ENCODE measurements at regions of chr11 and their contacts with region 1.

Region 1: DNA sequence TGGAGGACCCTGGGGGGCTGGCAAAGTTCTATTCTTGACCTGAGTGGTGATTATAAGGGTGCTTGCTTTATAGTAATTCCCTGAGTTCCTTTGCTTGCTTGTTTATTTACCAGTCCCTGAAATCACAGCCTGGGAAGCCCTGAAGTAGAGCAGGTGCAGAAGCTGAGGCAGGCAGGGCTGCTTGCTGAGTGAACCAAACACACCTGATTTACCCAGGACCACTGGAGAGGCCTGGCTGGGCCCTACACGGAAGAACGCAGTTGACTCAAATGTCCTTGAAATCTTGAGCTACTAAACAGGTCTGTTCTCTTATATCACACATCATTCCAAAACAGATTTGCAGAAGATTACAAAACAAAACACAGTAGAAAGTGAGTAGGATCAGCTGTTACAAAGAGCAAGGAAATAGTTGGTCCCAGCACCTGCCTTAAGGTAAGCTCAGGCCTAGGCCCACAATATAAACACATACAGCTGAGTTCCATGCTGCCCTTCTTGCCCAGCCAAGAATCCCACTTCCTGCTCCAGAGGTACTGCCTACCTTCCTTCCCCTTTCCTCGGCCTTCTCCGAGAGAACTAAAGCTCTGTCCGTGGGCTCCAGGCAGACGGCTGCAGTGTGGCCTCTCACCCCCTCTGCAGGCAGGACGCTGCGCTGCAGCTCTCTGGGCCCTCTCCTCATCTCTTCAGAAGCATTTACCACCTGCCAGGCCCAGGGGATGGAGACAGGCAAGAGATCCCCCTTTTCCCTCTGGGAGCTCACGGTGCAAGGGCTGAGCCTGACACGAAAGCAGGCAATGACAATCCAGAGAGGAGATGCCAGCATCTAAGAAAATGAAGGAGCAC is 46.1 kb upstream of the SCUBE2 start:
- DNase-seq: peak; percentile 85
- H3K4me3 Mint-ChIP-seq: no peak overlapping the region
- H3K27ac Mint-ChIP-seq: peak overlapping the region; percentile 77
- H3K4me1 Mint-ChIP-seq: peaks cover 33% of the 10 kb centered on the region
- H3K27me3 Mint-ChIP-seq: no peaks in the 10 kb centered on the region

Region 2: GRCh38 chr11:8682303-8683114 is 455.0 kb before region 1 on chr11 and contains the starts of genes RPL27A and TRIM66:
- CTCF ChIA-PET with region 1: no interaction called
- intact Hi-C with region 1: loop called (anchors 2 kb)
- DNase-seq: peak; percentile 99
- H3K4me3 Mint-ChIP-seq: peak within 1 kb of the TSS; percentile 91
- H3K27ac Mint-ChIP-seq: peak within 1 kb of the TSS; percentile 92
- H3K4me1 Mint-ChIP-seq: peaks cover 42% of the 10 kb centered on the region
- H3K27me3 Mint-ChIP-seq: no peaks in the 10 kb centered on the region
- total RNA-seq, gene RPL27A: 1,157 to 1,188 TPM
- total RNA-seq, gene TRIM66: 16.4 to 19.1 TPM

Region 3: DNA sequence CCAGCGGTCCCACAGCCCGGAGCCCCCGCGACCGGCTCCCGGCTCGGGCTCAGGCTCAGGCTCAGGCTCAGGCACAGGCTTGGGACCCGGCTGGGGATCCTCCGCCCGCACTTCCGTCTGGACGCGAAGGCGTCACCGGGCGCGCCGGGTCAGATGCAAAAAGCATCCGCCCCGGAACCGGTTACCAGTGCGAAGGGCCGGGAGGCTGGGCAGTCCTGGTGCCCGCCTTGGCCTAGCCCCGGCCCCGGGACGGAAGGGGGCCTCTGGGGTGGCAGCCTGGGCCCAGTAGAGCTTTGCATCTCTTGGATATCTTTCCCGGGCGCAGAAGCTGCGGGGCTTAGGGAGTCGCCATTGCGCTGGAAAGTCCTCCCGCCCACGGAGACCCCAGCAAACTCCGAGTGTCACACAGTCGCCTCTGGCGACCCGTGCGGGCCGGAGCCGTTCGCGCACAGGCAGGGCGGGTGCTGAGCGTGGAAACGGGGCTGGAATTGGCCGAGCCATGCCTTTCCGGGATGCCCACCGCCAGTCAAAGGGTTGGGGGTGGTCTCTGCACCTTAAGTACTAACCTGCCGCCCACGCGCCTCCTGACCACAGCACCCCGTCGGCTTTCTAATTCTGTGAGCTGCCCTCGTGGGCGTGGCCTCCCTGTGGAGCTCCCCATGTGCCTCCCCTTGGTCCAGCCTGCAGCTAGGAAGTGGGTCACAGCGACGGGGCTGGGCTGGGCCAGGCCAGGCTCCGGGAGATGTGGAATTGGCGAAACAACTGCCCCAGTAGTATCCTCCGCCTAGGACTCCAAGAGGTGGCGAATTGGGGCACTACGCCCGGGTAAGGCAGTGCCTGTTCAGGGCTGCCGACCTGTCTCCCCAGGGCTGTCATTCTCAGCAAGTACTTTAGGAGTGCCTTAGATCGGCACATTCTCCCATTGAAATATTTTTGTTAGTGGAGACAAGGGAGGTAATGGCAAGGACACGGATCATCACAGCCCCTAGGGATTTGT is 172.9 kb before region 1 on chr11 and contains the start of gene TMEM9B:
- CTCF ChIA-PET with region 1: interaction called, 11 read pairs
- intact Hi-C with region 1: loop called (anchors 1 kb)
- DNase-seq: peak; percentile 84
- H3K4me3 Mint-ChIP-seq: peak within 1 kb of the TSS; percentile 98
- H3K27ac Mint-ChIP-seq: peak within 1 kb of the TSS; percentile 88
- H3K4me1 Mint-ChIP-seq: peaks cover 28% of the 10 kb centered on the region
- H3K27me3 Mint-ChIP-seq: no peaks in the 10 kb centered on the region
- total RNA-seq, gene TMEM9B: 13.4 to 13.6 TPM

Region 4: GRCh38 chr11:9060700-9061111 is 76.8 kb before region 1 on chr11:
- CTCF ChIA-PET with region 1: interaction called, 5 read pairs
- intact Hi-C with region 1: loop called (anchors 1 kb)
- DNase-seq: peak; percentile 89
- H3K4me3 Mint-ChIP-seq: no peak overlapping the region
- H3K27ac Mint-ChIP-seq: no peak overlapping the region
- H3K4me1 Mint-ChIP-seq: peaks cover 12% of the 10 kb centered on the region
- H3K27me3 Mint-ChIP-seq: peaks cover 13% of the 10 kb centered on the region

Region 5: DNA sequence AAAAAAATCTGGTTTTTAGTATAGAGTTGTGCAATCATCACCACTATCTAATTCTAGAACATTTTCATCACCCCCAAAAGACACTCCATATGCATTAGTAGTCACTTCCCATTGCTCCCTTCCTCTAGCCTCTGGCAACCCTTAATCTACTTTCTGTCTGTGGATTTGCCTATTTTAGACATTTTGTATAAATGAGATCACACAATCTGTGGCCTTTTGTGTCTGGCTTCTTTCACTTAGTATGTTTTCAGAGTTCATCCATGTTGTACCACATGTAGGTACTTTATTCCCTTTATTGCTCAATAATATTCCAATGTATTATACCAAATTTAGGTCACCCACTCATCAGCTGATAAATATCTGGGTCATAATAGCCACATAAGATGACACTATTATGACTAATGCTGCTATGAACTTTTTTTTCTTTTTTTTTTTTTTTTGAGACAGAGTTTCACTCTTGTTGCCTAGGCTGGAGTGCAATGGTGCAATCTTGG is 21.4 kb after region 1 on chr11:
- CTCF ChIA-PET with region 1: interaction called, 8 read pairs
- intact Hi-C with region 1: loop called (anchors 2 kb)
- DNase-seq: no peak
- H3K4me3 Mint-ChIP-seq: no peak overlapping the region
- H3K27ac Mint-ChIP-seq: peak overlapping the region; percentile 84
- H3K4me1 Mint-ChIP-seq: peaks cover 29% of the 10 kb centered on the region
- H3K27me3 Mint-ChIP-seq: no peaks in the 10 kb centered on the region